Mucosa of descending colon (tissue), 3 donors: ENCODE measurements at regions of chr1 and their contacts with region 1.

Region 1: DNA sequence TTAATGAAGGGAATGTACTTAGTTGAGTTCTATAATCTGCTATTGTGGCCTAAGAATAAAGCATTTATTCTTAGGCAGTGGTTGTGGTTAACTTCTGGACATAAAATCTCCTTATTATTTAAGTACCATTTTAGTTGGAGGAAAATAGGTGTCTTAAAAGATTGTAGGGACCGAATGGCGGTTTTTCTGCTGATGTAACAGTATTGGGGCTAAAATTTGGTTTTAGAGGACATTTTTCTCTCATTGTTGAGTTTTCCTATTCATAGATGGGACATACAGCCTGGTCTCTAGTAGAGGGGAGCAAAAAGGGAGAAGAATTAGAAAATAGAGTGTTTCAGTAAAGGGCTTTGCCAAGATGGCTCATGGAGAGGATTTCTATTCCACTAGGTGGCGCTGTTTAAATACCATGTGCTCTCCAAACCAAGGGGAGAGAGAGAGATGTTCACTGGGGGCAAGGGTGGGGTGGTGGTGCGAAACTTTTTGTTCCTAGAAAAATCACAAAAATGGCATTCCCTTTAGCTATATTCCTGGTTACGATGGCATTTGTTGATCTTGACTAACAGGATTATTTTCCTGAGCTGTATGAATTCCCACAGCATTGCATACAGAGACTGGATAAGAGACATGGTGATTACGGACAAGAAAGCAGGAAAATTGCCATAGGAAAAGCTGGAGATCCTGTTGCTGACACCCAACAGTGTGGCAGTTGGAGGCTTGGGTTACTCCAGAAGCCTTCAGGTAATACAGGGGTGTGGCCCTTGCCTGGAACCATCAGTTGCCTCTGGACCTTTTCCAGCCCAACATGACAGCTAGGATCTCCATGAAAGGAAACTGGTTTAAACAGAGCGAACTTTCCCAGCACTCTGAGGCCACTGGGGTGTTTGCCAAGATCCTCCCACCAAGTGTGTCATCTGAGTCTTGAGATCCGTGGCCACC is 18.2 kb upstream of the FCGR2A start:
- DNase-seq: peak in 1 of 3 donors; percentile 63
- ATAC-seq: peak; percentile 73
- H3K4me3 ChIP-seq: no peak overlapping the region
- H3K4me1 ChIP-seq: no peaks in the 10 kb centered on the region
- CTCF ChIP-seq: peak; percentile 71

Region 2: GRCh38 chr1:161749509-161750407 is 262.7 kb after region 1 on chr1 and contains the start of gene DUSP12:
- intact Hi-C with region 1: loop called in 1 of 2 experiments (anchors 10 kb)
- DNase-seq: peak; percentile 92 to 95 (median 92)
- ATAC-seq: peak; percentile 99
- H3K4me3 ChIP-seq: peak within 1 kb of the TSS; percentile 88
- H3K4me1 ChIP-seq: peaks cover 11% of the 10 kb centered on the region
- CTCF ChIP-seq: no peak
- total RNA-seq, gene DUSP12: 14.3 to 19.5 (median 15.1) TPM